H1 (cell line): ENCODE measurements at regions of chr15 and their contacts with region 1.

Region 1: DNA sequence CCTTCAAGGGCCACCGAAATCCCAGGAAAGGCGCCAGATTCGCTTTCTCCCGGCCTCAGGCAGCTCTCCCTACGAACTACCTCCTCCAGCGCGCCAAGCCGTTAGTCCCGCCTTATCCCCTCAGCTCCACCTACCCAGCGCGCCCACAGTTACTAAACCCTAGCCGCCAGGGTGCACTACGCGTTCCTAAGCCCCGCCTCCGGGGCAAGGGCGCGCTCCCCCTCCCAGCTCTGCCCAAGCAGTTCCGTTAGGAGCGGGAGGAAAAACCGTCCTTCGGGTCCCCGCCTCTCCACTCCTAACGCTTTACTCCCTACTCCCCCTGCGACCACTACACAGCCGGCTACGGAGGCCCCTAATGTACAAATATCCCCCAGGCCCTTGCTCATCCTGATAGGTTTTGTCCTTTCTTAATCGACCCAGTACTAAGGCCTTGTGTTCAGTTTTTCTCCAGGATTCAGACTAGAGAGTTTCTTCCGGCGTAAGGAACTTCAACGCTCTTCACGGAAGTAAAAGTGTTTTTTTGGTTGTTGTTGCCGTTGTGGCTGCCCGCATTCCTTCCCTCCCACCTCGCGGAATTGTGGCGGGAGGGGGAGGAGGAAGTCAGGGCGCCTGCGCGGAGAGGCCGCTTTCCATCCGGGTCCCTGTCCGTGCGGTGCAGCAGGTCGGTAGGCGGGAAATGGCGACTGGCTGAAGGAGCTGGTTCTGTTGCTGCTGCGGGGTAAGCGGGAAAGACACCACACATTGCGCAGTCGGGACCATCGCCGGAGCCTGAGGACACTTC is at the start of gene CTDSPL2:
- DNase-seq: peak; percentile 95 to 98
- H3K4me3 ChIP-seq: peak within 1 kb of the TSS; percentile 98 to 100 (median 99)
- H3K27ac ChIP-seq: peak within 1 kb of the TSS; percentile 98
- H3K4me1 ChIP-seq: peaks cover 0 to 3% (median 0%) of the 10 kb centered on the region in 4 experiments; a peak in 1 of 7 replicates
- H3K27me3 ChIP-seq: no peaks in the 10 kb centered on the region
- CTCF ChIP-seq: peak in 2 of 3 experiments; percentile 0 to 47; a peak in 2 of 4 replicates
- EP300 ChIP-seq: no peak; a peak in 1 of 3 replicates
- POLR2A ChIP-seq: peak; percentile 74 to 93
- RAD21 ChIP-seq: 0 out of 4 replicates have a peak, but pooled peaks of 1 of the 2 experiments have one; percentile 6
- total RNA-seq, gene CTDSPL2: 64.5 and 64.7 TPM in 2 replicates

Region 2: GRCh38 chr15:44066316-44066740 is 360.8 kb before region 1 on chr15:
- CTCF ChIA-PET with region 1: no interaction called
- POLR2A ChIA-PET with region 1: no interaction called
- DNase-seq: peak; percentile 23 to 73
- H3K4me3 ChIP-seq: no peak overlapping the region
- H3K27ac ChIP-seq: no peak overlapping the region
- H3K4me1 ChIP-seq: no peaks in the 10 kb centered on the region
- H3K27me3 ChIP-seq: no peaks in the 10 kb centered on the region
- CTCF ChIP-seq: peak in 2 of 3 experiments; percentile 75 to 78; a peak in 3 of 4 replicates
- EP300 ChIP-seq: no peak
- POLR2A ChIP-seq: no peak
- RAD21 ChIP-seq: peak; percentile 91 to 93

Region 3: DNA sequence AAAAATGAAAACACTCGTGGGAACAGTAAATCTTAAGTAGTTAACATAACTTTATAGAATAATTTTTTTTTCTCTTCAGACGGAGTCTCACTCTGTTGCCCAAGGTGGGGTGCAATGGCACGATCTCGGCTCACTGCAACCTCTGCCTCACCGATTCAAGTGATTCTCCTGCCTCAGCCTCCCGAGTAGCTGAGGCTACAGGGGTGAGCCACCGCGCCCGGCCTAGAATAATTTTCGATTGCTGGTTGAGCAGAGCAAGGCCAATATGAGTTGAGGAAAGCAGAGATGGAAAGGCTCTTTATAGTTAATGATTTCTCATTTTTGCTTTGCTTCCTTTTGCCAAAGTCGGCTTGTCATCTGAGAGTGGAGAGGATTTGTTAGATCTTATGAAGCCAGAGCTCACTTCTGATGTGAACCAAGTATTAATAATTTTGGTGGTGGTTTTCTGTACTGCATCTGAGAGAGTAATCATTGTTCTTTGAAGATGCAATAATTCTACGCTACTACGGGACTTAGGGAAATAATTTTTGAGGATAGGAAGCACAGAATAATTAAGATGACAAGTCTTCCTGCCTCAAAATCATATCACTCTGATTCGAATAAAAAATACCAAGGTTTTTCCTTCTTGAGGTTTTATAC is 140.2 kb before region 1 on chr15:
- CTCF ChIA-PET with region 1: no interaction called
- POLR2A ChIA-PET with region 1: interaction called, 20 read pairs
- DNase-seq: no peak
- H3K4me3 ChIP-seq: peak overlapping the region in 3 of 4 experiments; percentile 75 to 100 (median 100); a peak in 3 of 8 replicates
- H3K27ac ChIP-seq: no peak overlapping the region
- H3K4me1 ChIP-seq: no peaks in the 10 kb centered on the region; a peak in 1 of 7 replicates
- H3K27me3 ChIP-seq: no peaks in the 10 kb centered on the region
- CTCF ChIP-seq: no peak
- EP300 ChIP-seq: no peak
- POLR2A ChIP-seq: no peak
- RAD21 ChIP-seq: no peak

Region 4: GRCh38 chr15:44414001-44414400 is 13.2 kb before region 1 on chr15:
- CTCF ChIA-PET with region 1: interaction called, 9 read pairs
- POLR2A ChIA-PET with region 1: interaction called, 13 read pairs
- DNase-seq: no peak
- H3K4me3 ChIP-seq: no peak overlapping the region
- H3K27ac ChIP-seq: no peak overlapping the region
- H3K4me1 ChIP-seq: no peaks in the 10 kb centered on the region
- H3K27me3 ChIP-seq: no peaks in the 10 kb centered on the region
- CTCF ChIP-seq: no peak
- EP300 ChIP-seq: no peak
- POLR2A ChIP-seq: no peak
- RAD21 ChIP-seq: no peak

Region 5: DNA sequence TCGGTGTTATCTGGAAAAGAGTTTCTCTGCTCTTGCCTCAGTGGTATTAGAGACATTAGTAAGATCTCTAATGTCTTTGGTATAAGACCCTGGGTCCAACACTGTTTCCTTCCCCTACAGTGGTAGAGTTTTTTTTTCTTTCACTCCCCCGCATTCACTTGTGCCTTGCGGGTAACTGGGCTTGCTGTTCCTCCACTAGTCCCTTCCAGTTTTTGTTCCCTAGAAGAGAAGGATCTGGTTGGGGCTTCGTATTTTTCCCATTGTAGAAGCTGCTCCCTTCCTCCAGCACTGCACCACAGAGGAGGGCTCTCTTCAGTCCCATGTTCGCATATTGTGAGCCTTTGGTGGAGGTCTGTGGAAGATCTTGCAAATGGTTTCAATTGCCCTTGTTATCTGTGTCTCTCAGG is 13.9 kb after region 1 on chr15:
- CTCF ChIA-PET with region 1: interaction called, 5 read pairs
- POLR2A ChIA-PET with region 1: interaction called, 32 read pairs
- DNase-seq: peak in 1 of 2 experiments; percentile 48
- H3K4me3 ChIP-seq: peak overlapping the region in 2 of 4 experiments; percentile 7 to 30; a peak in 4 of 8 replicates
- H3K27ac ChIP-seq: no peak overlapping the region
- H3K4me1 ChIP-seq: peaks cover 3 to 7% (median 5%) of the 10 kb centered on the region in 4 experiments; a peak in 5 of 7 replicates
- H3K27me3 ChIP-seq: no peaks in the 10 kb centered on the region
- CTCF ChIP-seq: no peak
- EP300 ChIP-seq: no peak
- POLR2A ChIP-seq: no peak
- RAD21 ChIP-seq: no peak

Region 6: DNA sequence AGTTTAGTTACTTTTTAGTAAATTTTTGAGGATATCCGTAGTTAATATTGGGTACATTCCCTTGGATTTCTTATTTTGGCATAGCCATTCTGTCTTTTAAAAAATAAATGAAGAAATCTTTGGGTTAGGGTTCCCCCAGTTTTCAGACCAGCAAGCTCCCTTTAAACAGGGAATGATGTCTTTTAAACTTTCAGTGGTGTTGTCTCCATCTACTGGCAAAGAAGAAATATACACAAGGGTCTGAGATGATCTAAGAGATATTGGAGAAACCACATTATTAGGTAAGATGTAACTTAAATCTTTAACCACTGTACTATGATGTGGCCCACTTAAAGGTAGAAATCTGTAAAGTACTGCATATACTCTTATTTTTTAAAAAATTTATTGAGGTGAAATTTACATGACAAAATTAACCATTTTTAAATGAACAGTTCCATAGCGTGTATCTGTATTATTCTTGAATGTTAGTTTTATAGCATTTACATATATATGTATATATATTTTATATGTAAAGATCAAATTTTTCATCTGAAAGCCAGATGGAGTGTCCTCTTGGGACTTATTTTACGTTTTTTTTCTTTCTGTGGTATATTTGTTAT is 74.7 kb after region 1 on chr15:
- CTCF ChIA-PET with region 1: interaction called, 7 read pairs
- POLR2A ChIA-PET with region 1: interaction called, 10 read pairs
- DNase-seq: no peak
- H3K4me3 ChIP-seq: no peak overlapping the region
- H3K27ac ChIP-seq: no peak overlapping the region
- H3K4me1 ChIP-seq: no peaks in the 10 kb centered on the region
- H3K27me3 ChIP-seq: no peaks in the 10 kb centered on the region
- CTCF ChIP-seq: peak in 2 of 3 experiments; percentile 34 to 48; a peak in 2 of 4 replicates
- EP300 ChIP-seq: no peak
- POLR2A ChIP-seq: no peak
- RAD21 ChIP-seq: peak; percentile 59 to 62

Region 7: DNA sequence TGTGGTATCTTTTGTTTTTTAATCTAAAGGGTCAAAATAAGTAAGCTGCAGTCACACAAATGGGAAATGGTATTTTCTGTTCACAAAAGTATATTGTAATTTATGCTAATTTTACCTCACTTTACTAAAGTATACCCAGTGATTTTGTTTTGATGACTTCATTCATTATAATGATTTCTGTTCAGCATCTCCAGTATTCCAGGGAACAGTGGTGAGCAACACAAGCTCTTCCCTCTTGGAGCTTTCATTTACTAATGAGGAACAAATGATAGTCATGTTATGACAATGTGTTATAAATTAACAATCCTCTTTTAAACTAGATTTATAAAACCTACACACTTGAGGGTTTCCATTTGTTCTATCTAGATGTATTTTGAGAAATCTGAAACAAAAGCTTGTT is 89.3 kb after region 1 on chr15:
- CTCF ChIA-PET with region 1: no interaction called
- POLR2A ChIA-PET with region 1: no interaction called
- DNase-seq: no peak
- H3K4me3 ChIP-seq: no peak overlapping the region
- H3K27ac ChIP-seq: no peak overlapping the region
- H3K4me1 ChIP-seq: no peaks in the 10 kb centered on the region
- H3K27me3 ChIP-seq: no peaks in the 10 kb centered on the region
- CTCF ChIP-seq: no peak
- EP300 ChIP-seq: no peak
- POLR2A ChIP-seq: no peak
- RAD21 ChIP-seq: no peak